ENCODE measurements at regions of chr4 and their contacts with region 1.

Region 1: GRCh38 chr4:40199999-40200874 is 3.4 kb downstream of the RHOH start:
- DNase-seq: peak; percentile 76
- ATAC-seq: peak; percentile 43
- H3K4me3 Mint-ChIP-seq: peak overlapping the region; percentile 93
- H3K27ac Mint-ChIP-seq: peak overlapping the region; percentile 97
- H3K4me1 Mint-ChIP-seq: peaks cover 40% of the 10 kb centered on the region
- H3K27me3 Mint-ChIP-seq: no peaks in the 10 kb centered on the region

Region 2: GRCh38 chr4:39937683-39938268 is 262.5 kb before region 1 on chr4:
- POLR2A ChIA-PET with region 1: no interaction called
- DNase-seq: no peak
- ATAC-seq: no peak
- H3K4me3 Mint-ChIP-seq: no peak overlapping the region
- H3K27ac Mint-ChIP-seq: no peak overlapping the region
- H3K4me1 Mint-ChIP-seq: peaks cover 48% of the 10 kb centered on the region
- H3K27me3 Mint-ChIP-seq: no peaks in the 10 kb centered on the region

Region 3: GRCh38 chr4:40149960-40150385 is 50.3 kb before region 1 on chr4:
- POLR2A ChIA-PET with region 1: interaction called, 14 read pairs
- DNase-seq: peak; percentile 50
- ATAC-seq: peak; percentile 95
- H3K4me3 Mint-ChIP-seq: no peak overlapping the region
- H3K27ac Mint-ChIP-seq: no peak overlapping the region
- H3K4me1 Mint-ChIP-seq: peaks cover 27% of the 10 kb centered on the region
- H3K27me3 Mint-ChIP-seq: no peaks in the 10 kb centered on the region

Region 4: DNA sequence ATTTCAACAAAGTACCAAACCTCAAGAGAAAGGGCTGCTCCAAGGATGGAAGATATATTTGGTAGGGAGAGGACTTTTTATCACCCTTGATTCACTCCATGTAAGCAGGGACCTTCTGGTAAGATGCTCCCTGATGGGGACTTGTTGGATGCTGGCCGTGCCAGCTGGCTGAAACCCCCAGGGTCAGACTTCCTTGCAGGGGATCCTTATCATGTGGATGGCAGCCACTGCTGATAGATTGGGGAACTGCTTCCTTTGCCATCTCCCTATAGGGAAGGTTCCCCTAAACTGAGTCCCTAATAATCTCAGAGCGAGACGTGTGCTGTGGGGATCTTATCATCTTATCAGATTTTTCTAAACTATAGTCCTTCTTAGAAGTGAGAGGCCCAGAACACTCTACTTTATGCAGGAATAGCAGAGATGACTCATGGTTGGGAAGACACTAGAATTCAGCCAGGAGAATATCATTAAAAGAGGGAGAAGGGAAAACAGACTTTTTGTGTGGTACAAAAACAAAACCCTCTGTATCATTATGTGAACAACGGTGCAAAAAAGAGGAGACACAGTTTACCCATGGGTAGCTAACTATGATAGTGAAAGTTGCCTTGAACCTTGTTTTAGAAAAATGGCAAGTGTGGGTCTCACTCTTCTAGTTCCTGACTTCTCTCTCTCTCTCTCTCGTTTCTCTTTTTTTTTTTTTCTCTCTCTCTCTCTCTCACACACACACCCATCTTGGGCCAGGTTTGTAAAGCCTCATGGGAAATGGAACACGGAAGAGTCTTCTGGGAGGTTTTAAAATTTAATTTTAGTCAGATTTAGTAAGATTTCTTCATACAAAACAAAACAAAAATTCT is 12.7 kb after region 1 on chr4:
- POLR2A ChIA-PET with region 1: interaction called, 360 read pairs
- DNase-seq: no peak
- ATAC-seq: peak; percentile 35
- H3K4me3 Mint-ChIP-seq: peak overlapping the region; percentile 82
- H3K27ac Mint-ChIP-seq: peak overlapping the region; percentile 92
- H3K4me1 Mint-ChIP-seq: peaks cover 74% of the 10 kb centered on the region
- H3K27me3 Mint-ChIP-seq: no peaks in the 10 kb centered on the region

Region 5: GRCh38 chr4:40228497-40229365 is 28.5 kb after region 1 on chr4:
- POLR2A ChIA-PET with region 1: interaction called, 65 read pairs
- DNase-seq: peak; percentile 21
- ATAC-seq: no peak
- H3K4me3 Mint-ChIP-seq: peak overlapping the region; percentile 82
- H3K27ac Mint-ChIP-seq: peak overlapping the region; percentile 94
- H3K4me1 Mint-ChIP-seq: peaks cover 86% of the 10 kb centered on the region
- H3K27me3 Mint-ChIP-seq: no peaks in the 10 kb centered on the region

Region 6: GRCh38 chr4:40247350-40247749 is 47.1 kb after region 1 on chr4:
- POLR2A ChIA-PET with region 1: interaction called, 64 read pairs
- DNase-seq: peak; percentile 71
- ATAC-seq: peak; percentile 67
- H3K4me3 Mint-ChIP-seq: peak overlapping the region; percentile 91
- H3K27ac Mint-ChIP-seq: peak overlapping the region; percentile 90
- H3K4me1 Mint-ChIP-seq: peaks cover 70% of the 10 kb centered on the region
- H3K27me3 Mint-ChIP-seq: no peaks in the 10 kb centered on the region

Region 7: GRCh38 chr4:40294339-40294738 is 94.1 kb after region 1 on chr4:
- POLR2A ChIA-PET with region 1: no interaction called
- DNase-seq: no peak
- ATAC-seq: no peak
- H3K4me3 Mint-ChIP-seq: no peak overlapping the region
- H3K27ac Mint-ChIP-seq: no peak overlapping the region
- H3K4me1 Mint-ChIP-seq: peaks cover 45% of the 10 kb centered on the region
- H3K27me3 Mint-ChIP-seq: no peaks in the 10 kb centered on the region

Region 8: GRCh38 chr4:40309250-40309774 is 109.1 kb after region 1 on chr4:
- POLR2A ChIA-PET with region 1: interaction called, 132 read pairs
- DNase-seq: peak; percentile 92
- ATAC-seq: peak; percentile 61
- H3K4me3 Mint-ChIP-seq: peak overlapping the region; percentile 83
- H3K27ac Mint-ChIP-seq: peak overlapping the region; percentile 94
- H3K4me1 Mint-ChIP-seq: peaks cover 74% of the 10 kb centered on the region
- H3K27me3 Mint-ChIP-seq: no peaks in the 10 kb centered on the region

Measured in activated naive CD8-positive, alpha-beta T cell treated with anti-CD3 and anti-CD28 coated beads, Interleukin-2, amount 10 ng/mL, durations not matched to agents 7 days and 5 days (primary cell).